ENCODE measurements at regions of chr14 and their contacts with region 1.

Region 1: GRCh38 chr14:52299692-52300278 is 14.3 kb upstream of the PTGER2 start:
- DNase-seq: peak; percentile 12 to 31 (median 20)
- ATAC-seq: peak; percentile 75
- H3K4me3 ChIP-seq: no peak overlapping the region
- H3K27ac ChIP-seq: no peak overlapping the region
- H3K4me1 ChIP-seq: no peaks in the 10 kb centered on the region
- H3K27me3 ChIP-seq: no peaks in the 10 kb centered on the region
- CTCF ChIP-seq: peak in 2 of 3 experiments; percentile 19 to 68; a peak in 4 of 6 replicates
- EP300 ChIP-seq: no peak
- POLR2A ChIP-seq: no peak
- RAD21 ChIP-seq: peak; percentile 55 to 68

Region 2: GRCh38 chr14:52351233-52352060 is 51.7 kb after region 1 on chr14:
- CTCF ChIA-PET with region 1: no interaction called
- POLR2A ChIA-PET with region 1: no interaction called
- in situ Hi-C with region 1: no loop called
- intact Hi-C with region 1: no loop called
- DNase-seq: no peak
- ATAC-seq: no peak
- H3K4me3 ChIP-seq: no peak overlapping the region
- H3K27ac ChIP-seq: no peak overlapping the region
- H3K4me1 ChIP-seq: no peaks in the 10 kb centered on the region
- H3K27me3 ChIP-seq: no peaks in the 10 kb centered on the region
- CTCF ChIP-seq: no peak
- EP300 ChIP-seq: no peak
- POLR2A ChIP-seq: no peak
- RAD21 ChIP-seq: no peak

Region 3: DNA sequence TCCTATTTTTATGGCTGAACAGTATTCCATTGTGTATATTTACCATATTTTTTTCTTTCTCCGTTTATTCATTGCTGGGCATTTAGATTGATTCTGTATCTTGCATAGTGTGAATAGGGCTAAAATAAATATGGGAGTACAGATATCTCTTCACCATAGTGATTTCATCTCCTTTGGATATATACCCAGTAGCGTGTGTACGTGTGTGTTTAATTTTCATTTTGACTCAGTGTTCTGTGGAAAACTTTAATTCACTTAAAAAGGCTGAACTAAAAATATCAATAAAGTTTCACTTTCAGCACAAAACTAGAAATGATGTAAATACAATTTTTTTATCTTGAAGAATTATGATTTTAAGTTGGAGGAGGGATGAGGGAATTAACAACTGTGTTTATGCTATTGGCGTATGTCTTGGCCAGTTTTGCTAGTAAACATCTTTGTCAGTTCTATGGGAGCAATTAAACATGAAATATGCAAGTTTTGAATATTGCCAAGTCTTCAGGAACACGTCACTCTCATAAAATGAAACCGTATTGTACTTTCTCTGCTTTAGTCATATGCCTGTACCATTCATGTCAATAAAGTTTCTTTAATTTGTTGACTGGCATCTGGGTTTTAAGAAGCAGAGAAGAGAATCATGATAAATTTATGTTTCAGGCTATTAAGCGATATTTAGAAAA is 114.1 kb after region 1 on chr14:
- CTCF ChIA-PET with region 1: no interaction called
- POLR2A ChIA-PET with region 1: no interaction called
- in situ Hi-C with region 1: no loop called
- intact Hi-C with region 1: loop called (anchors 10 kb)
- DNase-seq: no peak
- ATAC-seq: no peak
- H3K4me3 ChIP-seq: no peak overlapping the region
- H3K27ac ChIP-seq: no peak overlapping the region
- H3K4me1 ChIP-seq: no peaks in the 10 kb centered on the region
- H3K27me3 ChIP-seq: peaks cover 0 to 2% of the 10 kb centered on the region in 2 experiments; a peak in 2 of 5 replicates
- CTCF ChIP-seq: no peak
- EP300 ChIP-seq: no peak
- POLR2A ChIP-seq: no peak
- RAD21 ChIP-seq: no peak

Region 4: GRCh38 chr14:52835122-52835903 is 535.5 kb after region 1 on chr14:
- CTCF ChIA-PET with region 1: no interaction called
- POLR2A ChIA-PET with region 1: no interaction called
- in situ Hi-C with region 1: loop called (anchors 25 kb)
- intact Hi-C with region 1: no loop called
- DNase-seq: peak in 2 of 4 experiments; percentile 12 to 40
- ATAC-seq: peak; percentile 87
- H3K4me3 ChIP-seq: no peak overlapping the region
- H3K27ac ChIP-seq: no peak overlapping the region
- H3K4me1 ChIP-seq: no peaks in the 10 kb centered on the region; a peak in 2 of 5 replicates
- H3K27me3 ChIP-seq: no peaks in the 10 kb centered on the region; a peak in 1 of 5 replicates
- CTCF ChIP-seq: no peak
- EP300 ChIP-seq: no peak
- POLR2A ChIP-seq: no peak
- RAD21 ChIP-seq: no peak

Region 5: DNA sequence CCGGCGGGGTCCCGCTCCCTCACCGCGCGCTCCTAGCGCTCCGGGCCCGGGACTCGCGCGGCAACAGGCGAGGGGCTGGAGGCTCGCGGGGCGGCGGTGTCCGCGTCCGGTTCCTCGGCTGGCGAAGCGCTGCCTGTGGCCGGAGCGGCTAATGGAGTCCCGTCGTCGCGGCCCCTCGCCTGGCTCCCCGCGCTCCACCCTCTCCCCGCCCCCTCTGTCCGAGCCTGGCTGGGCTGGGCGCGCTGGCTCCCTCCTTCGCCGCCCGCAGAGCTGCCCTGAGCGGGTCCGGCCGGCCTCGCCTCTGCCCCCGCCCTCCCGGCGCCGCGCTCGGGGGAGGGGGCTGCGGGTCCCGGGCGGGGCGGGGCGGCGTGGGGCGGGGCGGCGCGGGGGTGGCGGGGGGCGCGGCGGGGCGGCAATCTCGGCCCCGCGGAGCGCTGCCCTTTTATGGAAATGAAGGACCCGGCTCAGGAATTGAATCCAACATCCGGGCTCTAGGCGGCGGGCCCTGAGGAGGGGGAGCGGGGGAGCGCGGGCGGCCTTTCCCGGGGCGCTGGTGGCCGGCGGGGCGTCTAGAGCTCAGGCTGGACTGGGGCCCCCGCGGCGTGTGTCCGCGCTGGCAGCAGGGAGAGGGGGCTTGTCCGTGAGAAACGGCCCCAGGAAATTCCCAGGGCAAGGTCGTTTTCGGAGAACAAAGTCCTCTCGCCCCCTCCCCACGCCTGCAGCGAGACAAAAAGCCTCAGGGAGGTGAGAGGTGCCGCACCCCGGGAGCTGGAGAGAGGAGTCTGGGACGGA is 651.3 kb after region 1 on chr14 and contains the start of gene FERMT2:
- CTCF ChIA-PET with region 1: no interaction called
- POLR2A ChIA-PET with region 1: no interaction called
- in situ Hi-C with region 1: no loop called
- intact Hi-C with region 1: loop called (anchors 10 kb)
- DNase-seq: peak; percentile 41 to 59 (median 51)
- ATAC-seq: peak; percentile 88
- H3K4me3 ChIP-seq: peak within 1 kb of the TSS; percentile 37
- H3K27ac ChIP-seq: no peak within 1 kb of the TSS
- H3K4me1 ChIP-seq: peaks cover 0 to 14% of the 10 kb centered on the region in 2 experiments; a peak in 2 of 5 replicates
- H3K27me3 ChIP-seq: peaks cover 15 to 20% of the 10 kb centered on the region in 2 experiments
- CTCF ChIP-seq: no peak
- EP300 ChIP-seq: no peak
- POLR2A ChIP-seq: no peak
- RAD21 ChIP-seq: no peak
- polyA plus RNA-seq, gene FERMT2: 0.10 to 0.18 TPM